Activated CD4-positive, alpha-beta memory T cell treated with anti-CD3 and anti-CD28 coated beads for 36 hours (primary cell): ENCODE measurements at regions of chr12 and their contacts with region 1.

Region 1: DNA sequence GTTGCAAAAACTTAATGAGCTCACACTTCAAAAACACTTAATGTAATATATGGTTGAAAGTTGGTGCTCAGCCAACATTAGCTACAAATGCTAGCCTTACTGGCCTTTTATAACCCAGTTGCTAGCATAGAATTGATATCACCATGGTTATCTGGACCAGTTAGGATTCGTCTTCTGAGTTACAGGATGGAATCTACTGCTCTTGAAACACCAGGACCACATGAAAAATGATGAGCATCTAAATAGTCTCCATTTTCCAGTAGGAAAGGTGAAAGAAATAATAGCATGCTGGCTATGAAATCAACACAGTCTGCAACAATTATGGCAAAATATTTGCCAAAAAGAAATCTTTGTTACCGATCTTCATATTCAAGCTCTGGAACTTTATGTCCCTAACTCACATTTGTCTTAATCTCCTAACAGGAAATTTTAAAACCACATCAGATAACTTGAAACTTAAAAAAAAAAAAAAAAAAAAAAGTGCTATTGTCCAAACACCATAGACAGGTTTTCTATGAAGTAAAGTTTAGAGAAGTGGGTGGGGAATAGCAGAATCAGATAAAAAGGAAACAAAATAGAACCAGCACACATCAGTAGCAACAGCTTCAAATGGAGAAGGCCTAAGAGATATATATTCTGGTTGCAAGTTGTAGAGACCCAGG is 12.6 kb upstream of the CD69 start:
- DNase-seq: no peak
- H3K4me3 Mint-ChIP-seq: peak overlapping the region; percentile 7
- H3K27ac Mint-ChIP-seq: peak overlapping the region; percentile 55
- H3K4me1 Mint-ChIP-seq: peaks cover 88% of the 10 kb centered on the region
- H3K27me3 Mint-ChIP-seq: no peaks in the 10 kb centered on the region

Region 2: DNA sequence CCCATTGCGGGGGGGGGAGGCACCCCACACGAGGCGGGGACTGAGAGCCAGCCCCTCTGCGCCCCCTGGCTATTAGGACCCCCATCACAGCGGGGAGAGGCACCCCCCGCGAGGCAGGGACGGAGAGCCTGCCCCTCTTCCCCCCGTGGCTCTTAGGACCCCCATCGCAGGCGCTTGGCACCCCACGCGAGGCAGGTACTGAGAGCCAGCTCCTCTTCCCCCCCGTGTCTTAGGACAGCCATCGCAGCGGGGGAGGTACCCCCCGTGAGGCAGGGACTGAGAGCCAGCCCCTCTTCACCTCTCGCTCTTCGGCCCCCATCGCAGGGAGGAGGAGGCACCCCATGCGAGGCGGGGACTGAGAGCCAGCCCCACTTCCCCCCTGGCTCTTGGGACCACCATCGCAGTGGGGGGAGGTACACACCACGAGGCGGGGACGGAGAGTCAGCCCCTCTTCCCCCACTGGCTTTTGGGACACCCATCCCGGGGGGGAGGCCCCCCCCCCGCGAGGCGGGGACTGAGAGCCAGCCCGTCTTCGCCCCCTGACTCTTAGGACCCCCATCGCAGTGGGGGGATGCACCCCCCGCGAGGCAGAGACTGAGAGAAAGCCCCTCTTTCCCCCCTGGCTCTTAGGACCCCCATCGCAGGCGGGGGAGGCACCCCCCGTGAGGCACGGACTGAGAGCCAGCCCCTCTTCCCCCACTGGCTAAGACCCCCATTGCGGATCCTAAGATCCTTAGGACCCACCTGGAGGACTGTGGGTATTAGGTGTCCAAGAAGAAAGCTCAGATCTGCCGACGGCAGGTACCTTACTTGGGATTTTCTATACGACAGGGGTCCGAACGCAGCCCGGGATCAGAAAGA is 366.6 kb before region 1 on chr12:
- CTCF ChIA-PET with region 1: no interaction called
- POLR2A ChIA-PET with region 1: no interaction called
- intact Hi-C with region 1: no loop called
- DNase-seq: no peak
- H3K4me3 Mint-ChIP-seq: no peak overlapping the region
- H3K27ac Mint-ChIP-seq: no peak overlapping the region
- H3K4me1 Mint-ChIP-seq: no peaks in the 10 kb centered on the region
- H3K27me3 Mint-ChIP-seq: no peaks in the 10 kb centered on the region

Region 3: DNA sequence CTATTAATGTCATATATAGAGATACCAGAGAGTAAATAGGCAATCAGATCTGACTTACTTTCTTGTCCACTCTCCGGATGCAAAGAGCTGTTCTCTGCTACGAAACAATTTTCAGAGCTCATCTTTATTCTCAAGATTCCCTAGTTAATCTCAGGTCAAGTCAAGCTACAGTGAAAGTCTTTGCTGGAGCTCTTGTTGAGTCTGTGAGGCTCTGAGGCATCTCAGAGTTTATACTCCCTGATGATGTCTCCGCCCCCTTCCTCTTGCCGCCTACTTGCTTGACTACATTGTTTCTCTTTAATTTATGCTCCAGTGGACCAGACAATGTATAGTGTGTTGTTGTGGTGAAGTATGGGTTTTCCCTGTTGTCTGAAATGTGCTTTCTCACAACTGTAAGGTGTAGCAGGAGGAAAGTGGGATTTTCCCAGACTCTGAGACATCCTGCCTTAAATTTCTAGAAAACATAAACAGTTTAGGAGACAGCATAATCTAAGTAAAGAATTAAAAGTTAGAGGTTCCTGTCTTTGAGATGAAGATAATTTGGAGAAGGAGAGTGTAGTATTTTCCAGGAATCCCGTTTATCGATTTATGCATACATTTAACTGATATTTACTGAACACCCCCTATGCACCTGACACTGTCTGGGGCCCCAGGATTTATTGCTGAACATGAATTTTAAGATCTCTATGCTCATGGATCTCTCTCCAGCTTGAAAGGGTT is 12.5 kb before region 1 on chr12 and contains the start of gene CD69:
- CTCF ChIA-PET with region 1: interaction called, 4 read pairs
- POLR2A ChIA-PET with region 1: interaction called, 33 read pairs
- intact Hi-C with region 1: no loop called
- DNase-seq: peak; percentile 90
- H3K4me3 Mint-ChIP-seq: peak within 1 kb of the TSS; percentile 100
- H3K27ac Mint-ChIP-seq: peak within 1 kb of the TSS; percentile 99
- H3K4me1 Mint-ChIP-seq: peaks cover 52% of the 10 kb centered on the region
- H3K27me3 Mint-ChIP-seq: peaks cover 2% of the 10 kb centered on the region
- total RNA-seq, gene CD69: 118 to 120 TPM